OCI-LY7 (cell line): ENCODE measurements at regions of chr2 and their contacts with region 1.

Region 1: DNA sequence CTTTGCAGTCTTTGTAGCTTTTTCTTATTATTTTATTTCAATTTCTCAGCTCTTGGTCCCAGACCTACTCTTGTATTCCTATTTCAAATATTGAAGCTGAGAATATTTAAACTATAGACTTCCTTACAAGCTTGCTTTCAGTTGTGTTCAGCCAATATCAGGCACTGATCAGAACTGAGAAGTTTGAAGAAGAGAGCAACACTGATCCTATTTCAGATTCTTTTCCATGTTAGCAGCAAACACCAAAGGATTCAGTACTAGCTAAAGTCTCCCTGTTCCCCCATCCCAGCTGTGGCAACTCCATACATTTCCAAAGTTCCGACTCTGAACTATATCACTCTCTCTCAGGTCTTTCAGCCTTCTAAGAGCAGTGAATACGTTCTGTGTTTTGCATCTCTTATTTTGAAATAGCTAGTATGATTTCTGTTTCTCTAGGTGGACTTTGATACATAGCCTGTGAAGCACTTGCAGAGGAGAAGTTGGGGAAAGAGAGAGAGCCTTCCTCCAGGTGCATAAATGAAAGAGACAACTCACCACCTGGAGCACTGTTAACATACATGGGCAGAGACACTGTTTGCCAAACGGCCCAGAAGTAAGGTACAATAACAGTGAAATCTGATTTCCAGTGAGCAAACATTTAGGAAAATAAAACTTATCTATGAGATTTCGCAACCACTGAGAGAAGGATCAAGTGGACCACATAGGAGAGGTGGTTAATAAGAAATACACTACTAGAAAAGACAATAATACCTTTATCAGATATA is 135.0 kb upstream of the ZNF804A start:
- DNase-seq: peak; percentile 59
- H3K4me3 ChIP-seq: no peak overlapping the region
- H3K27ac ChIP-seq: peak overlapping the region; percentile 5
- H3K4me1 ChIP-seq: peaks cover 22% of the 10 kb centered on the region
- CTCF ChIP-seq: no peak

Region 2: DNA sequence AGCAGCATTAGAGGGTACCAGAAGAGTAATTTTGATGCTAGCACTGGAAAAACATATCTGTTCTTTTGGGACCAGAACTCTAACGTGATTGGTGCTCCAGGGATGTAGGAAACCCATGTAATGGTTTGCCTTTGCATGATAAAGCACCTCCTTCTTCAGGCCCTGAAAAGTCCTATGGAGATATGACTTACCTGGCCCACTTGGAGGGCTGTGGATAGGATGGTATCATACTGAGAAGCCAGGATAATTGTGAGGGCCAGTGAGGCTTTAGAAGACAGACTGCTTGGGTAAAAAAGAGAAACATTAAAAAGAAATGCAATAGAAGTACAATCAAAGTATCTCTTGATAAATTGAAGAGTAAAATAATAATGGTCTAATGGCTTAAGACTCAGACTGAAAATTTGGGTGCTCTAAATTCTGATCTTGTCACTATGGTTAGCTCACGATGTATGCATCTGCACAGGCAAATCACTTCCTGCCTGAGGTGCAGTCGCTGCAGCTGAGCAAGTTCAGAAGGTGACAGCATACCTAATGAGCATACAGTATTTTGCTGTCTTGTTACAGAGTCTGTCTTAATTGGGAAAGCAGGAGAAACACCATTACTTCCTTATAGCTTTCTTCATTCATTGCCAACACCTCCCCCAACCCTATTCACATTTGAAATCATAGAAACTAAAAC is 967.6 kb before region 1 on chr2:
- CTCF ChIA-PET with region 1: no interaction called
- POLR2A ChIA-PET with region 1: interaction called, 10 read pairs
- intact Hi-C with region 1: no loop called
- DNase-seq: peak; percentile 69
- H3K4me3 ChIP-seq: peak overlapping the region; percentile 40
- H3K27ac ChIP-seq: peak overlapping the region; percentile 31
- H3K4me1 ChIP-seq: peaks cover 18% of the 10 kb centered on the region
- CTCF ChIP-seq: no peak